Heart left ventricle (tissue), 16 donors: ENCODE measurements at regions of chr11 and their contacts with region 1.

Region 1: GRCh38 chr11:3947061-3947460 is 91.6 kb downstream of the STIM1 start:
- DNase-seq: peak in 4 of 5 donors; percentile 36 to 72 (median 50)
- ATAC-seq: peak; percentile 83 to 94 (median 92)
- H3K4me3 ChIP-seq: peak overlapping the region in 1 of 12 donors; percentile 19
- H3K27ac ChIP-seq: peak overlapping the region; percentile 43 to 88 (median 80)
- H3K4me1 ChIP-seq: peaks cover 5 to 97% (median 71%) of the 10 kb centered on the region in 12 donors
- H3K27me3 ChIP-seq: no peaks in the 10 kb centered on the region
- CTCF ChIP-seq: no peak
- POLR2A ChIP-seq: no peak

Region 2: DNA sequence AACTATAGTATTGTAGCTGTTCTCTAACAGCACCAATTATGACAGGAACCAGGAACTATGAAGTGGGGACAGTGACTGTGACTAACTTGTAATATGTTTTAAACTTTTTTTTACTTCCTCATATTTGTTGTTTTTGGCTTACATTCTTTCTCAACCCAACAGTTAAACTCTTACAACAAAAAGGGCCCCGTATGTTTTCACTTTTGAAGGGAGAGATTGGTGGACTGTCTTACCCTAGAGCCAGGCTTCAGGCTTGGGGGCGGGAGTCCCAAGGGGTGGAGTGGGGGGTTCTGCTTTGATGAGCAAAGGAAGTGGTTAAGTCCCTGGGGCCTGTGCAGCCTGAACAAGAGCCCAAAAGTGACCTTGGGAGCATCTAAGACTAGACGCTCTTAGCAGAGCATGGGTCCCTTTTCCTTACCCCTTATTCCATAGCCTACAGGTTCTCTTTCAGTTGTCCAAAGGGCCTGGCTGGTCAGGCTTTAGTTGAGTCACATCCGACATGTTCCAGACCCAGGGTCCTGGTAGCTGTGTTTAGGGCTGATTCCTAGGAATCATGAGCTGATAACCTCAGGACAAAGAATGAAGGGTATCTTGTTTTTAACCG is 52.8 kb before region 1 on chr11:
- intact Hi-C with region 1: loop called in 1 of 10 experiments (anchors 10 kb)
- DNase-seq: peak; percentile 50 to 80 (median 78)
- ATAC-seq: peak; percentile 50 to 89 (median 72)
- H3K4me3 ChIP-seq: no peak overlapping the region
- H3K27ac ChIP-seq: peak overlapping the region in 11 of 12 donors; percentile 8 to 89 (median 50)
- H3K4me1 ChIP-seq: peaks cover 0 to 48% (median 22%) of the 10 kb centered on the region in 12 donors
- H3K27me3 ChIP-seq: no peaks in the 10 kb centered on the region
- CTCF ChIP-seq: no peak
- POLR2A ChIP-seq: no peak

Region 3: DNA sequence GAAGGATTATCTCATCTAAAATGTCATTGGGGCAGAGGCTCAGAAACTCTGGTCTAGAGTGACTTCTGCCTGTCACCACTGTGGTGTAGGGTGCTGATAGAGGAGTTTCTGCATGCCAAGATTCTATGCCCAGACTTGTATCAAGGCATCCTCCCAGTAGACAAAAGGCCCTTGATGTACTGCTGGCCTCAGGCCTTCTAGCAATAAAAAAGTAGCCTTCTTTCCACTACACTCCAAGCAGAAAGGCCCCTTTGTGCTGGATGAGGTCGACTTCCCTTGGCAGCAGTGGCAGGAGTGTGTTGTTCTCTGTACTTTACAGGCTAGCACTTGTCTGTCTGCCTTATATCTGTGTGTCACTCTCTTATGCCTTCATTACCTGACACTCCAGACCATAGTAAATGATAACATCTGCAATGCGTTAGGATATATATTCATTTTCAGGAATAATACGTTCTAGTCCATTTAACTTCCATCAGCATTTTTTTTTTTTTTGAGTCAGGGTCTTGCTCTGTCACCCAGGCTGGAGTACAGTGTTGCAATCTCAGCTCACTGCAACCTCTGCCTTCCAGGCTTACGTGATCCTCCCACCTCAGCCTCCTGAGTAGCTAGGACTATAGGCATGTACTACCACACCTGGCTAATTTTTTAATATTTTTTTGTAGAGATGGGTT is 98.0 kb after region 1 on chr11:
- intact Hi-C with region 1: loop called in 3 of 10 experiments (anchors 5 to 10 kb)
- DNase-seq: peak in 2 of 5 donors; percentile 34 to 60
- ATAC-seq: peak; percentile 48 to 74 (median 62)
- H3K4me3 ChIP-seq: no peak overlapping the region
- H3K27ac ChIP-seq: peak overlapping the region in 6 of 12 donors; percentile 15 to 49 (median 36)
- H3K4me1 ChIP-seq: peaks cover 2 to 28% (median 23%) of the 10 kb centered on the region in 12 donors
- H3K27me3 ChIP-seq: no peaks in the 10 kb centered on the region
- CTCF ChIP-seq: no peak
- POLR2A ChIP-seq: no peak

Region 4: DNA sequence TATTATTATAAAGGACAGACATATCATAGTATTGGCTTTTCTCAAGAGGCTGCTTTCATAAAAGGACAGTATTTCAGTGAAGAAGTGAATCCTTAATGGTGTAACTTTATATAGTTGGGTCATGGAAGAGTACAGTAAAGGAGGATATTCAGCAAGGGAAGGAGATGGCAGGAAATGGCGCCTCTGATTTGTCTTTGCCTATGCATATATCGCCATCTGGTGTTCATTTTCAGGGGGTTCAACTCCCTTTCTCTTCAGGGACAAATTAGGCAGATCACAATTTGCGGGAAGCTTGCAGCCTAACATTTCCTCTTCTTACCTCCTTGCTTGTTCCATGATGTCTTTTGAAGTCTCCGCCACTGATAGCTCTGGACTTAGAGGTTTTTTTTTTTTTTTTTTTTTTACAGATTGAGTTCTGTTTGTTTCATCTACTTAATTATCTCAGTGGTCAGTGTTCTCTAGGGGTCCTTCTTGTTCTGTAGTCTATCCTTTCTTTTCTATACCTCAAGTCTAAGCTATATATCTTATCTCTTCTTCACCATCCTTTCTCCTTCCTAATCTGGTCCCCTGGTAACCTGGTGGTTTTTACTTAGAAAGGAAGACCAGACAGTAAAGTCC is 125.7 kb after region 1 on chr11:
- intact Hi-C with region 1: loop called in 1 of 10 experiments (anchors 5 kb)
- DNase-seq: peak in 3 of 5 donors; percentile 51 to 75 (median 60)
- ATAC-seq: peak; percentile 75 to 95 (median 82)
- H3K4me3 ChIP-seq: no peak overlapping the region
- H3K27ac ChIP-seq: peak overlapping the region in 2 of 12 donors; percentile 2 to 17
- H3K4me1 ChIP-seq: peaks cover 0 to 19% (median 2%) of the 10 kb centered on the region in 12 donors
- H3K27me3 ChIP-seq: no peaks in the 10 kb centered on the region
- CTCF ChIP-seq: peak; percentile 74 to 92 (median 86)
- POLR2A ChIP-seq: no peak

Region 5: GRCh38 chr11:5036669-5037068 is 1089.6 kb after region 1 on chr11:
- intact Hi-C with region 1: no loop called
- DNase-seq: no peak
- ATAC-seq: no peak
- H3K4me3 ChIP-seq: no peak overlapping the region
- H3K27ac ChIP-seq: no peak overlapping the region
- H3K4me1 ChIP-seq: no peaks in the 10 kb centered on the region
- H3K27me3 ChIP-seq: no peaks in the 10 kb centered on the region
- CTCF ChIP-seq: no peak
- POLR2A ChIP-seq: no peak